ENCODE measurements at regions of chr10 and their contacts with region 1.

Region 1: DNA sequence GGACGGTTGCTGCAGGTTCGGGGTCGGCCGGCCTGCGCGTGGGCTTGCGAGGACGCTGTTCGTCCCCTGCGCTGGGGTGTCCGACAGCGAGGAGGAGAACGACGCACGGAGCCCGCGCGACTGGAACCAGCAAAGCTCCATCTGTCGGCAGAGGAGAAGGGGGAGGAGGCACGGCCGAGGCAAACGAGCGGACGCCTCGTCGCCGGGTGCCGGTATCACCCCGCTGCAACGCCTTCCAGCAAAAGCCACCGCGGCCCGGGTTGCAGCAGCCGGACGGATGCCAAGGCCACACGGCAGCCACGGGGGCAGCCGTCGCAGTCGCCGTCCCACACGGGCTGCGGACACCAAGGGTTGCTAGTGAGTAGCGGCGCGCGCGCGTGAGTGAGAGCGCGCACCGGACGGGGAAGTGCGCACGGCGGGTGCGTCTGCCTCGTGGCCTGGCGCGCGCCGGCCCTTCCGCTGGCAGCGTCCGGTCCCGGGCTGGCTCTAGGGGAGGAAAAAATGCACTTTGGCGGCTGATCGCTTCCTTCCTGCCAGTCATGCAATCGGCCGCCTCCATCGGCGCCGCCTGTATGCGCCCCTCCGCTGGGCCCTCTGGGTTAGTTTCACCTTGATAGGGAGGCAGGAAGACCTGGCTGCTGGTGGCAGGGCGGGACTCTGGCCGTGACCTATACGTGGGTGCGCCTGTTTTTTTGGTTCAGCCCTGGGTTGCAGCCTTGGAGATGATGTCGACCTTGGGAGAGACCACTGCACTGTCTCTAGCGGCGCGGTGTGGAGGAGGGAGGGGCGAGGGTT is 434 bp downstream of the STAMBPL1 start:
- DNase-seq: peak; percentile 49 to 82
- H3K4me3 ChIP-seq: peak overlapping the region; percentile 70 to 81 (median 77)
- H3K27ac ChIP-seq: peak overlapping the region; percentile 69
- H3K4me1 ChIP-seq: peaks cover 0 to 6% (median 2%) of the 10 kb centered on the region in 4 experiments; a peak in 3 of 7 replicates
- H3K27me3 ChIP-seq: peaks cover 0 to 3% (median 1%) of the 10 kb centered on the region in 4 experiments; a peak in 1 of 7 replicates
- CTCF ChIP-seq: peak in 1 of 3 experiments; percentile 8; a peak in 1 of 4 replicates
- EP300 ChIP-seq: no peak
- POLR2A ChIP-seq: peak in 1 of 2 experiments; percentile 75; a peak in 2 of 3 replicates
- RAD21 ChIP-seq: no peak

Region 2: GRCh38 chr10:88765816-88766215 is 114.7 kb before region 1 on chr10:
- CTCF ChIA-PET with region 1: no interaction called
- POLR2A ChIA-PET with region 1: no interaction called
- DNase-seq: no peak
- H3K4me3 ChIP-seq: no peak overlapping the region
- H3K27ac ChIP-seq: no peak overlapping the region
- H3K4me1 ChIP-seq: peaks cover 0 to 4% (median 0%) of the 10 kb centered on the region in 4 experiments; a peak in 2 of 7 replicates
- H3K27me3 ChIP-seq: no peaks in the 10 kb centered on the region
- CTCF ChIP-seq: no peak
- EP300 ChIP-seq: no peak
- POLR2A ChIP-seq: no peak
- RAD21 ChIP-seq: no peak

Region 3: DNA sequence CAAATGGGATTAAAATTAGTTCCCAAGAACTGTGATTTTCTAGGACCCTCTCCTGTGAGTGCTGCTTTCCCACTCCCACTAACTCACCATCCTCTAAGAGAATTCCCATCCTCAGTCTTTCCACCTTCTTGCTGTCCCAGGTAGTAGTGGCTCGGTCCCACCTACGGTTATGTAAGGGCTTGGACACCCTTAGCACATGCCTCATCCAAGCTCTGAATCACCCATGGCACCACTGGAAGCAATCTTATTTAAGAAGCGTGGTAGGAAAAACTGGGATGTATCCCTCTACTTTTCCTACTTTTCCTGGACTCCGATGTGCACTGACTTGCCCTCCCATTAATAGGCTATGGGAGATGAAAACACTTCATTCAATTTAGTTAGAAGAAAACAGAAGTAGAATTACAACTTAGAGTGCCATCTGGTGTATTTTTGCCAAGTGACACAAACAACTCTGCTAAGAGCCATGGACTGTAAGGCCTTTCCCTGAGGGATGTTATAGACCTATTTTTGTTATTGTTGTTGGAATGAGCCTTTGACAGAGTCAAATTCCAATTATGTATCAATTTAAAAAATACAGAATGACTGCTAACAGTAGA is 15.1 kb before region 1 on chr10:
- CTCF ChIA-PET with region 1: interaction called, 3 read pairs
- POLR2A ChIA-PET with region 1: interaction called, 10 read pairs
- DNase-seq: no peak
- H3K4me3 ChIP-seq: no peak overlapping the region
- H3K27ac ChIP-seq: no peak overlapping the region
- H3K4me1 ChIP-seq: no peaks in the 10 kb centered on the region
- H3K27me3 ChIP-seq: no peaks in the 10 kb centered on the region
- CTCF ChIP-seq: peak in 1 of 3 experiments; percentile 16; a peak in 2 of 4 replicates
- EP300 ChIP-seq: no peak
- POLR2A ChIP-seq: no peak
- RAD21 ChIP-seq: peak; percentile 7 to 15; a peak in 1 of 4 replicates

Measured in H1 (cell line).